ENCODE measurements at regions of chr10 and their contacts with region 1.

Region 1: DNA sequence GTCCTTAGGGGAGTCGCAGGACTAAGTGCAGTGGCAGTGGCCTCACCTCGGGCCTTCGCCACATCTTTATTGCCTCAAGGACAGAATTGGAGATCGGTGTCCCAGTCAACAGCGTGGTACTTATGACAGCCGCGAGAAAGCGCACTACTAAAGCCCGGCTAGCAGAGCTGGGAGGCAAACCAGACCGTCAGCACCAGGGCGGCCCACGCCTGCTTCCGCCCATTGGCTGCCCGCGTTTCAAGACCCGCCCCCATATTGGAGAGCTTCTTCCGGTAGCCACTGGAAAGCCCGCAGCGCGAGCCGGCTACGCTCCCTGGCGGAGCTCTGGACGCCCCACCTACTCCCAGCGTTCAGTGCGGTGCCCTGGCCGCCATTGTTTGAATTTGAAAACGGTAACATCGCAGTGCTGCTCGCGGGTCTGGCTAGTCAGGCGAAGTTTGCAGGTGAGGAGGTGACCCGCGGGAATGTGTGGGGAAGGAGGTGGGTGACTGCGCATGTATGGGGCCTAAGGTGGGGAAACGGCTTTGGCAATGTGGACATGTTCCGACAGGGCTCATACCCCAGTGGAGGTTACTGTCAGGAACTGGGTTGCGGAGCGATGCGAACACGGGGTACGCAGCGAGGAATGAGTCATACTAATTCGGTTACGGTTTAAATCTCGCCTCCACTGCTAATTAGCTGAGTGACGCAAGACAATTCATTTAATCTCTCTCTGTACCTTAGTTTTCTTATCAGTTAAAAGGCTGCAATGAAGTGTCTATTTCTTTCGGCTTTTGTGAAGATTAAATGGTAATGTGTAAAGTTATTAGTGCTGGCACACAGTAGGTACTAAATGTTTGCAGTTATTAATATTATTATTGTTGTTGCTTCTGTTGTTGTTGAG is at the start of gene KIF20B:
- DNase-seq: peak; percentile 100
- H3K4me3 ChIP-seq: peak within 1 kb of the TSS; percentile 81
- H3K27ac ChIP-seq: peak within 1 kb of the TSS; percentile 78
- H3K4me1 ChIP-seq: peaks cover 32% of the 10 kb centered on the region
- H3K27me3 ChIP-seq: no peaks in the 10 kb centered on the region
- total RNA-seq, gene KIF20B: 7.8 and 8.9 TPM in 2 replicates

Region 2: GRCh38 chr10:89414146-89414878 is 287.2 kb before region 1 on chr10 and contains the start of gene IFIT5:
- in situ Hi-C with region 1: loop called (anchors 25 kb)
- DNase-seq: peak; percentile 86
- H3K4me3 ChIP-seq: peak within 1 kb of the TSS; percentile 86
- H3K27ac ChIP-seq: peak within 1 kb of the TSS; percentile 89
- H3K4me1 ChIP-seq: peaks cover 11% of the 10 kb centered on the region
- H3K27me3 ChIP-seq: no peaks in the 10 kb centered on the region
- total RNA-seq, gene IFIT5: 21.8 and 25.9 TPM in 2 replicates